ENCODE measurements at regions of chr19 and their contacts with region 1.

Region 1: DNA sequence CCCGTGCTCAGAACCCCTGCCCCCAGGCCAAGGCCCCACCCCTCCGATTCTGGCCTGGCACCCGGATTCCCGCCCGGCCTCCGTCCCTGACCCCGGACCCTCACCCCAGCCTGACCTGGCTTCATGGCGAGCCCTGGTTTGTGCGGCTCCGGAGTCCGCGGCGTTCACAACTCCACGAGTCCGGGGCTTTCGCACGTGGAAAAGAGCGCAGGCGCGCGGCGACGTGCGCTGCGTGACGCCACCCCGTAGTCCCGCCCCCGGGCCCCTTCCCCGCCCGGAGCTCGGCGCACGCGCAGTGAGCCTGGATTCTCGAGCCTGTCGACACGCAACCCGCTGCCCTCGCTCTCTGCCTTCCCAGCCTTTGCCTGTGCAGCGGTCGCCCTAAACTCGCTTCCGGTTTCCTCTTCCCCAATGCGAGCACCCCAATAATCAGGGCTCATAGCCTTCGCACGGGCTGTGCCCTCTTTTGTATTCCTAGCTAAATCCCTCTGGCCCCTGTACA is at the start of gene FBL:
- DNase-seq: peak; percentile 94 to 99 (median 98)
- ATAC-seq: peak; percentile 94
- H3K4me3 ChIP-seq: peak within 1 kb of the TSS; percentile 86 to 87
- H3K4me3 Mint-ChIP-seq: peak within 1 kb of the TSS; percentile 87
- H3K27ac ChIP-seq: peak within 1 kb of the TSS; percentile 71 to 84
- H3K27ac Mint-ChIP-seq: peak within 1 kb of the TSS; percentile 96
- H3K4me1 ChIP-seq: peaks cover 39% of the 10 kb centered on the region
- H3K4me1 Mint-ChIP-seq: peaks cover 48% of the 10 kb centered on the region
- H3K27me3 ChIP-seq: no peaks in the 10 kb centered on the region
- H3K27me3 Mint-ChIP-seq: no peaks in the 10 kb centered on the region
- CTCF ChIP-seq: no peak
- total RNA-seq, gene FBL: 351 to 365 TPM

Region 2: DNA sequence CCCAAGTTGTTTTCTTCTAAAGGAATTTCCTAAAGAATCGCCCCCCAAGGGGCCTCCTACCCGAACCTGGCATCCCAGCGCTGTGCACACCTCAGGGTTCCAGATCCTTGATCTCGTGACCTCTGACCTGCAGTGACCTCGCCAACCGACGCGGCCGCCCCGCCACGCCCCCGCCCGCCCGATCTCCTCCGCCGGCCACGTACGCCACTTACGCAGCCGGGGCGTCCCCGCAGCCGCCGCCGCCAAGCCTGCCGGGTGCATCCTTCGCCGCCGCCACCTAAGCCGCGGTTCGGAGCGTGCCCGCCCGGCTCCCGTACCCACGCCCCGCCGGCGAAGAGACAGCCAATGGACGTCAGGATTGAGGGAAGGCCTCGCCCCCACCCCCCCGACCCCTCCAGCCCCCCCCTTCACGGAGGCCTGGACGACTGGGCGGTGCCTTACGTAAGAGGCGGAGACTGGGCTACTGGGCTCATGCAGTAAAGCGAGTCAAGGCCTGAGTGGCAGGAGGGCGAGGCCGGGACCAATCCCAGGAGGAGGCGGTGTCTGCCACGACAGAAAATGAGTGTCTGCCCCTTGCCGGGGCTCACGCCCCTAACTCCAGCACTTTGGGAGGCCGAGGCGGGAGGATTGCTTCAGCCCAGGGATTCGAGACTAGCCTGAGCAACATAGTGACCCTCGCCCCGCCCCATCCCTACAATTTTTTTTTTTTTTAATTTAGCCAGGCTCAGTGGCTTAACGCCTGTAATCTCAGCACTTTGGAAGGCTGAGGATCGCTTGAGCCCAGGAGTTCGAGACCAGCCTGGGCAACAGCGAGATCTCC is 1530.4 kb before region 1 on chr19 and contains the start of gene YIF1B:
- CTCF ChIA-PET with region 1: no interaction called
- POLR2A ChIA-PET with region 1: no interaction called
- intact Hi-C with region 1: loop called in 1 of 2 experiments (anchors 5 kb)
- DNase-seq: peak; percentile 91 to 98 (median 94)
- ATAC-seq: peak; percentile 92
- H3K4me3 ChIP-seq: peak within 1 kb of the TSS; percentile 60 to 68
- H3K4me3 Mint-ChIP-seq: peak within 1 kb of the TSS; percentile 86
- H3K27ac ChIP-seq: peak within 1 kb of the TSS; percentile 93 to 95
- H3K27ac Mint-ChIP-seq: peak within 1 kb of the TSS; percentile 95
- H3K4me1 ChIP-seq: peaks cover 34% of the 10 kb centered on the region
- H3K4me1 Mint-ChIP-seq: peaks cover 52% of the 10 kb centered on the region
- H3K27me3 ChIP-seq: peaks cover 0 to 2% of the 10 kb centered on the region in 2 experiments
- H3K27me3 Mint-ChIP-seq: no peaks in the 10 kb centered on the region
- CTCF ChIP-seq: no peak
- total RNA-seq, gene YIF1B: 12.0 to 13.0 TPM

Region 3: GRCh38 chr19:39539519-39540332 is 306.5 kb before region 1 on chr19 and contains the start of gene EID2:
- CTCF ChIA-PET with region 1: no interaction called
- POLR2A ChIA-PET with region 1: no interaction called
- intact Hi-C with region 1: loop called in 1 of 2 experiments (anchors 5 kb)
- DNase-seq: peak; percentile 84 to 97 (median 95)
- ATAC-seq: peak; percentile 91
- H3K4me3 ChIP-seq: peak within 1 kb of the TSS; percentile 81 to 95
- H3K4me3 Mint-ChIP-seq: peak within 1 kb of the TSS; percentile 97
- H3K27ac ChIP-seq: peak within 1 kb of the TSS; percentile 90 to 93
- H3K27ac Mint-ChIP-seq: peak within 1 kb of the TSS; percentile 98
- H3K4me1 ChIP-seq: peaks cover 31% of the 10 kb centered on the region
- H3K4me1 Mint-ChIP-seq: peaks cover 58% of the 10 kb centered on the region
- H3K27me3 ChIP-seq: no peaks in the 10 kb centered on the region
- H3K27me3 Mint-ChIP-seq: no peaks in the 10 kb centered on the region
- CTCF ChIP-seq: peak; percentile 74
- total RNA-seq, gene EID2: 16.3 to 17.7 TPM

Region 4: DNA sequence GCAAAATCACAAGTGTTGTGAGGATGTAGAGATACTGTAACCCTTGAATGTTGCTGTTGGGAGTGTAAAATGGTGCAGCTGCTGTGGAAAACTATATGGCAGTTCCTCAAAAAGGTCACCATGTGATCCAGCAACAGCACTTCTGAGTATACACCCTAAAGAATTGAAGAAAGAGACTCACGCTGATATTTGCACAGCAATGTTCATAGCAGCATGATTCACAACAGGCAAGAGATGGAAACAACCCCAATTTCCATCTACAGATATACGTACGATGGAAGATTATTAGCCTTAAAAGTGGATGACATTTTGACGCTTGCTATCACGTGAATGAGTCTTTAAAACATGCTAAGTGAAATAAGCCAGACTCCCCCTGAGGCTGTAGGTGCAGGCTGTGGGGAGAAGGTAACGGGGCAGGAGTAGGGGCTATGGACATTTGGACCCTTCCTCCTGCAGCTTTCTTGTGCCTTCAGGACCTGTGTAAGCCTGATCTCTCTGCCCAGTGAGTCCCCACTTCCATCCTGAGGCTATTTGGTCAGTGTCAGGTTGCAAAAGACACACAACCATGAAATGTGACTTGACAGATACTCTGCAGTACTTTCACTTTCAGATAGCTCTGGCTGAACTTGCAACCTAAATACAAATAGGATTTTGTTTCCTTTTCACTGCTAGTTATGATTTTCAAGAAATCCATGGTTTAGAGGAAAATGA is 288.6 kb before region 1 on chr19:
- CTCF ChIA-PET with region 1: no interaction called
- POLR2A ChIA-PET with region 1: no interaction called
- intact Hi-C with region 1: loop called in 1 of 2 experiments (anchors 10 kb)
- DNase-seq: no peak
- ATAC-seq: peak; percentile 38
- H3K4me3 ChIP-seq: peak overlapping the region; percentile 2 to 25
- H3K4me3 Mint-ChIP-seq: peak overlapping the region; percentile 68
- H3K27ac ChIP-seq: peak overlapping the region in 1 of 2 experiments; percentile 72
- H3K27ac Mint-ChIP-seq: peak overlapping the region; percentile 75
- H3K4me1 ChIP-seq: peaks cover 16% of the 10 kb centered on the region
- H3K4me1 Mint-ChIP-seq: peaks cover 19% of the 10 kb centered on the region
- H3K27me3 ChIP-seq: no peaks in the 10 kb centered on the region
- H3K27me3 Mint-ChIP-seq: no peaks in the 10 kb centered on the region
- CTCF ChIP-seq: no peak

Region 5: GRCh38 chr19:39725995-39726394 is 120.2 kb before region 1 on chr19:
- CTCF ChIA-PET with region 1: no interaction called
- POLR2A ChIA-PET with region 1: no interaction called
- intact Hi-C with region 1: no loop called
- DNase-seq: no peak
- ATAC-seq: no peak
- H3K4me3 ChIP-seq: no peak overlapping the region
- H3K4me3 Mint-ChIP-seq: no peak overlapping the region
- H3K27ac ChIP-seq: no peak overlapping the region
- H3K27ac Mint-ChIP-seq: no peak overlapping the region
- H3K4me1 ChIP-seq: no peaks in the 10 kb centered on the region
- H3K4me1 Mint-ChIP-seq: no peaks in the 10 kb centered on the region
- H3K27me3 ChIP-seq: peaks cover 0 to 3% of the 10 kb centered on the region in 2 experiments
- H3K27me3 Mint-ChIP-seq: peaks cover 58% of the 10 kb centered on the region
- CTCF ChIP-seq: no peak

Region 6: DNA sequence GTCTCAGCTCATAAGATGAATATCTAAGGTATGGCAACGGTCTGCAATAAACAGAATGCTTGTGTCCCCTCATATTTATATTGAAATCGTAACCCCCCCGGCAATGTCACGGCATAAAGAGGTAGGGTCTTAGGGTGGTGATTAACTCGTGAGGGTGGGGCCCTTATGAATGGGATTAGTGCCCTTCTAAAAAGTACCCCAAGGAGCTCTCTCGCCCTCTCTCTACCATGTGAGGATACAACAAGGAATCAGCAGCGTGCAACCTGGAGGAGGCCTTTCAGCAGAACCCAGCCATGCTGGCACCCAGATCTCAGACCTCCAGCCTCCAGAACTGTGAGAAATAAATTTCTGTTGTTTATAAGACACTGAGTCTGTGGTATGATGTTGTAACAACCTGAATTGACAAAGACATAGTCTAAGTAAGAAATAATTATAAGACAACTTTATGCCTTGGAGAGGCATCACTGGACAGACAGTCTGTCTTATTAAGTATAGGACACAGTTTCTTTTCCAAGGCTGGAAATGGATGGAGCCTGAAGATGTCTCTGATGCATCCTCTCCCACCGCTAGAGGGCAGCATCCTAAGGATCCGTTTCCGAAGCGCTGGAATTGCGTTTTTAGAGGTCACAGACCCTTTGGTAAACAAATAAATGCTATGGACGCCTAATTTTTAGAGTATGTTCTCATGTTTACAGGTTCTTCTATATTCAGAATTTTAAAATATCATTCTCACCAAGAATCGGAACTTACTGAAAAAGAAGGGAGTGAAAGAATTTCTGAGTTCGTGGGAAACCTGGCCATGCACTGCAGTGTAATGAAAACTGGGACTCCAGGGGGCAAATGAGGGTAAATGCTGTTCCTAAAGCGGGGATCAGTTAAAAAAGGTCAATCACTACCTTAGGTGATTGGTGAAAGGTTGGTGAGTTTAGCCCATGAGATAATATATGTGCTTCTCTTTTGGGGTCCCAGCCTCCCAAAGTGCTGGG is 80.8 kb before region 1 on chr19:
- CTCF ChIA-PET with region 1: interaction called, 8 read pairs
- POLR2A ChIA-PET with region 1: no interaction called
- intact Hi-C with region 1: loop called (anchors 1 kb)
- DNase-seq: peak in 8 of 9 experiments; percentile 7 to 65 (median 49)
- ATAC-seq: no peak
- H3K4me3 ChIP-seq: no peak overlapping the region
- H3K4me3 Mint-ChIP-seq: no peak overlapping the region
- H3K27ac ChIP-seq: no peak overlapping the region
- H3K27ac Mint-ChIP-seq: no peak overlapping the region
- H3K4me1 ChIP-seq: no peaks in the 10 kb centered on the region
- H3K4me1 Mint-ChIP-seq: no peaks in the 10 kb centered on the region
- H3K27me3 ChIP-seq: no peaks in the 10 kb centered on the region
- H3K27me3 Mint-ChIP-seq: peaks cover 13% of the 10 kb centered on the region
- CTCF ChIP-seq: peak; percentile 73

Region 7: DNA sequence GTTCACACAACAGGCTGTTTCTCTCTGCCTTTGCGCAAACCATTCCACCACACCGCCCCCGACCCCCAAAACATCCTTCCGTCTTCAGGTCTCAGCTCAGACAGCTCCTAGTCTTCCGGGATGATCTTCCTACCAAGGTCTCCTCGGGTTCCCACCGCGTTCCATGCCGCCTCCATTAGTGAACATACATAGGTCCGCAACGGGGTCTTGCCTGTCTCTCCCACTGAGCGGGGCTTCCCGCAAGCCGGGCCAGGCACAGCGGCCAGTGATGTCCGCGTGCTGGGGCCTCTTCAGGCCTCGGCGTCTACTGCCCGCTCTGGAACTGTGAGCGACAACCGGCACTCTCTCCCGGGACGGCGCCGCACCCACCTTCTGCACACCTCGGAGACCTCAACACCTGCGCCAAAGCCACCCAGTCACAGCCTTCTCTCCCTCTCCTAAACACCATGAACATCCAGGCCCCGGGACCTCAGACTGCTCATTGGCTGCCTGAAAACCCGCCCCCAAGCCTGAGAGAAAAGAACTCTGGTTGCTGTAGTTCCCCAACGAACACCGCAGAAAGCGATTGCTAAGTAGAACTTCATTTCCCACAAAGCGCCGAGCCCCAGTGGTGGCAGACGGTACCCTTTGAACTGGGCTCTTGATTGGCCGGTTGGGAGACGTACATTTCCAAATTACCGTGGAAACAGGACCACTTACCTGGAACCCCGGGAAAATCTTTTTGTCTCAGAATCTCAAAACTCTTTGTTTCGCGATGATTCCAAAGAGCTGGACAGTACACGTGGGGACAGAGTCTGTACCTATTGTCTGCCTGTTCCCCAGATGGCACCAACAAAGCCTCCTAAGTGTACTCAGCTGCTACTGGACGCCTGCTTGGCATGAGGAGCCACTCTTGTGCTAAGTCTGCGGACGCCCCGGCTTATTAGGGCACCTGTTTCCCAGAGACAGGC is 21.8 kb before region 1 on chr19:
- CTCF ChIA-PET with region 1: interaction called, 24 read pairs
- POLR2A ChIA-PET with region 1: interaction called, 6 read pairs
- intact Hi-C with region 1: loop called (anchors 1 kb)
- DNase-seq: peak; percentile 72 to 94 (median 87)
- ATAC-seq: peak; percentile 98
- H3K4me3 ChIP-seq: peak overlapping the region; percentile 72 to 79
- H3K4me3 Mint-ChIP-seq: no peak overlapping the region
- H3K27ac ChIP-seq: peak overlapping the region; percentile 43 to 45
- H3K27ac Mint-ChIP-seq: no peak overlapping the region
- H3K4me1 ChIP-seq: peaks cover 27% of the 10 kb centered on the region
- H3K4me1 Mint-ChIP-seq: peaks cover 17% of the 10 kb centered on the region
- H3K27me3 ChIP-seq: no peaks in the 10 kb centered on the region
- H3K27me3 Mint-ChIP-seq: no peaks in the 10 kb centered on the region
- CTCF ChIP-seq: no peak

Region 8: DNA sequence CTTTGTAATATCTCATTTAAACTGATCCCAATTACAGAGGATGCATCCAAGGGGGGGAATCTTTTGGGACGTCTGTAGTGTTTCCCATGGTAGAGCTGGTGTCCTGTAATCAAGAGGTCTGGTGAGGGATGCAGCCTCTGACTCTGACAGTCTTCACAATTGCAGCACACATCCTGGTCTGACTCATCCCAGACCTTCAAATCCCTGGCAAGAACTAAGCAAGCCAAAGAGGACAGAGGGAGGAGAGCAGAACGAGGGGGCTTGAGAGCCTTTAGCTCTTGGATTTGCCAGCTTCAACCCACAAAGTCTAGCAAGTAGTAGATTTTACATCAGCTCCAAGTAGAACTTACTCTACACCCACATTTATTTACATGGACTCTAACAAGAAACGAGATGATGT is 105.5 kb after region 1 on chr19:
- CTCF ChIA-PET with region 1: no interaction called
- POLR2A ChIA-PET with region 1: no interaction called
- intact Hi-C with region 1: no loop called
- DNase-seq: peak in 2 of 9 experiments; percentile 39 to 48
- ATAC-seq: no peak
- H3K4me3 ChIP-seq: peak overlapping the region; percentile 44 to 58
- H3K4me3 Mint-ChIP-seq: peak overlapping the region; percentile 84
- H3K27ac ChIP-seq: peak overlapping the region; percentile 55 to 81
- H3K27ac Mint-ChIP-seq: peak overlapping the region; percentile 99
- H3K4me1 ChIP-seq: peaks cover 83% of the 10 kb centered on the region
- H3K4me1 Mint-ChIP-seq: peaks cover 81% of the 10 kb centered on the region
- H3K27me3 ChIP-seq: no peaks in the 10 kb centered on the region
- H3K27me3 Mint-ChIP-seq: no peaks in the 10 kb centered on the region
- CTCF ChIP-seq: no peak

Region 9: GRCh38 chr19:40103600-40103999 is 257.4 kb after region 1 on chr19:
- CTCF ChIA-PET with region 1: no interaction called
- POLR2A ChIA-PET with region 1: no interaction called
- intact Hi-C with region 1: no loop called
- DNase-seq: no peak
- ATAC-seq: no peak
- H3K4me3 ChIP-seq: no peak overlapping the region
- H3K4me3 Mint-ChIP-seq: no peak overlapping the region
- H3K27ac ChIP-seq: no peak overlapping the region
- H3K27ac Mint-ChIP-seq: no peak overlapping the region
- H3K4me1 ChIP-seq: no peaks in the 10 kb centered on the region
- H3K4me1 Mint-ChIP-seq: no peaks in the 10 kb centered on the region
- H3K27me3 ChIP-seq: no peaks in the 10 kb centered on the region
- H3K27me3 Mint-ChIP-seq: no peaks in the 10 kb centered on the region
- CTCF ChIP-seq: no peak

Region 10: GRCh38 chr19:40190891-40191835 is 344.9 kb after region 1 on chr19 and contains the start of gene MAP3K10:
- CTCF ChIA-PET with region 1: no interaction called
- POLR2A ChIA-PET with region 1: interaction called, 3 read pairs
- intact Hi-C with region 1: loop called in 1 of 2 experiments (anchors 2 kb)
- DNase-seq: peak; percentile 41 to 86 (median 70)
- ATAC-seq: peak; percentile 79
- H3K4me3 ChIP-seq: peak within 1 kb of the TSS; percentile 82 to 100
- H3K4me3 Mint-ChIP-seq: peak within 1 kb of the TSS; percentile 91
- H3K27ac ChIP-seq: peak within 1 kb of the TSS; percentile 81 to 90
- H3K27ac Mint-ChIP-seq: peak within 1 kb of the TSS; percentile 91
- H3K4me1 ChIP-seq: peaks cover 16% of the 10 kb centered on the region
- H3K4me1 Mint-ChIP-seq: peaks cover 34% of the 10 kb centered on the region
- H3K27me3 ChIP-seq: no peaks in the 10 kb centered on the region
- H3K27me3 Mint-ChIP-seq: no peaks in the 10 kb centered on the region
- CTCF ChIP-seq: no peak
- total RNA-seq, gene MAP3K10: 26.4 to 27.7 TPM